Caco-2 (cell line): ENCODE measurements at regions of chr19 and their contacts with region 1.

Region 1: GRCh38 chr19:53520550-53521372 is 17.2 kb upstream of the ZNF331 start:
- DNase-seq: peak; percentile 92 to 97
- H3K4me3 ChIP-seq: peak overlapping the region; percentile 78
- H3K4me3 Mint-ChIP-seq: peak overlapping the region; percentile 90
- H3K27ac Mint-ChIP-seq: peak overlapping the region; percentile 85
- H3K4me1 ChIP-seq: no peaks in the 10 kb centered on the region
- H3K4me1 Mint-ChIP-seq: no peaks in the 10 kb centered on the region
- H3K27me3 ChIP-seq: no peaks in the 10 kb centered on the region
- H3K27me3 Mint-ChIP-seq: no peaks in the 10 kb centered on the region
- CTCF ChIP-seq: no peak

Region 2: DNA sequence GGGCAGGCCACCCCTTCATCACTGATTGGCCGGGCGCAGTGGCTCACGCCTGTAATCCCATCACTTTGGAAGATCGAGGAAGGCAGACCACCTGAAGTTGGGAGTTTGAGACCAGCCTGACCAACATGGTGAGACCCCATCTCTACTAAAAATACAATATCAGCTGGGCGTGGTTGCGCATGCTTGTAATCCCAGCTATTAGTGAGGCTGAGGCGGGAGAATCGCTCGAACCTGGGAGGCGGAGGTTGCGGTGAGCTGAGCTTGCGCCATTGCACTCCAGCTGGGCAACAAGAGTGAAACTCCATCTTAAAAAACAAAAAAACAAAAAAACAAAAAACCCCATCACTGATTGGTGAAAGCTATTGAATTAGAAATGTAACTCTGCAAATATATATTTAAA is 22.2 kb before region 1 on chr19:
- CTCF ChIA-PET with region 1: no interaction called
- POLR2A ChIA-PET with region 1: no interaction called
- intact Hi-C with region 1: no loop called
- DNase-seq: no peak
- H3K4me3 ChIP-seq: no peak overlapping the region
- H3K4me3 Mint-ChIP-seq: no peak overlapping the region
- H3K27ac Mint-ChIP-seq: peak overlapping the region; percentile 72
- H3K4me1 ChIP-seq: peaks cover 14% of the 10 kb centered on the region
- H3K4me1 Mint-ChIP-seq: peaks cover 17% of the 10 kb centered on the region
- H3K27me3 ChIP-seq: no peaks in the 10 kb centered on the region
- H3K27me3 Mint-ChIP-seq: no peaks in the 10 kb centered on the region
- CTCF ChIP-seq: no peak

Region 3: DNA sequence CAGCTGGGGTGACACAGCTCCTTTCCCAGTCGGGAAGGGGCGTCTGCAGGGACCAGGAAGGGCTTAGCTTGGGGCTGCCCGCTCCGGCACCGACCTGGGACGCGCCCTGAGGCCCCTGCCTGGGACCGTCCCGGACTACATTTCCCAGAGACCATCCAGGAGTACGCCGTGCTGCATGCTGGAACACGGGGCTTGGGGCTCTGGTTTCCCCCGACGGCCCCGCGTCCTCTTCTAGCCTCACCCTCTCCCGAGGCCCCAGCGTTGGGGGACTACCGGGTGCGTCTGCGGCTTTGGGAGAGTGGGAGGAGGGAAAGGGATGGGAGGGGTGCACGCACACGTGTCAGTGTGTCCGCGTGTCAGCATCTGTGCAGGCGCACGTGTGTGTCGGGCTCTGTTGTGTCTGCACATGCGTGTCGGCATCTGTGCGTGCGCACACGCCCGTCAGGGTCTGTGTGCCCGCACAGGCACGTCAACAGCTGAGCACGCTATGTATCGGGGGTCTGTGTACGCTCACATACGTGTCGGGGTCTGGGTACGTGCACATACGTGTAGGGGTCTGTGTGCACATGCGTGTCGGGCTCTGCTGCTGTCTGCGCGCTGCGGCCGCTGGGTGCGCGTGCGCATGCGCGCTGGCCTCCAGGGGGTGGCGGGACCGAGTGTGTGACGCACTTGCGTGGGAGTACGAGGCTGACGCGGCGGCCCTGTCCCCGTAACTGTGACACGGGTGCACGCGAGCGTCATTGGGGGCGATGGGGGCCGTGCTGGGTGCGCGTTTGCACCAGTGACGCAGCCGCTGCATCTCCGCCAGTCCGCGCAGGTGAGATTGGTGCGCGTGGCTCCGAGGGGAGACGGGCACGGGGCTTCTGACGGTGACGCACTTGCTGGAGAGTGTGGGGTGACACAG is 17.0 kb after region 1 on chr19 and contains the start of gene ZNF331:
- CTCF ChIA-PET with region 1: no interaction called
- POLR2A ChIA-PET with region 1: interaction called, 3 read pairs
- intact Hi-C with region 1: loop called (anchors 1 kb)
- DNase-seq: peak; percentile 86
- H3K4me3 ChIP-seq: peak within 1 kb of the TSS; percentile 88
- H3K4me3 Mint-ChIP-seq: peak within 1 kb of the TSS; percentile 94
- H3K27ac Mint-ChIP-seq: peak within 1 kb of the TSS; percentile 99
- H3K4me1 ChIP-seq: peaks cover 18% of the 10 kb centered on the region
- H3K4me1 Mint-ChIP-seq: no peaks in the 10 kb centered on the region
- H3K27me3 ChIP-seq: no peaks in the 10 kb centered on the region
- H3K27me3 Mint-ChIP-seq: no peaks in the 10 kb centered on the region
- CTCF ChIP-seq: peak in 1 of 2 experiments; percentile 40
- total RNA-seq, gene ZNF331: 42.2 and 42.6 TPM in 2 replicates

Region 4: DNA sequence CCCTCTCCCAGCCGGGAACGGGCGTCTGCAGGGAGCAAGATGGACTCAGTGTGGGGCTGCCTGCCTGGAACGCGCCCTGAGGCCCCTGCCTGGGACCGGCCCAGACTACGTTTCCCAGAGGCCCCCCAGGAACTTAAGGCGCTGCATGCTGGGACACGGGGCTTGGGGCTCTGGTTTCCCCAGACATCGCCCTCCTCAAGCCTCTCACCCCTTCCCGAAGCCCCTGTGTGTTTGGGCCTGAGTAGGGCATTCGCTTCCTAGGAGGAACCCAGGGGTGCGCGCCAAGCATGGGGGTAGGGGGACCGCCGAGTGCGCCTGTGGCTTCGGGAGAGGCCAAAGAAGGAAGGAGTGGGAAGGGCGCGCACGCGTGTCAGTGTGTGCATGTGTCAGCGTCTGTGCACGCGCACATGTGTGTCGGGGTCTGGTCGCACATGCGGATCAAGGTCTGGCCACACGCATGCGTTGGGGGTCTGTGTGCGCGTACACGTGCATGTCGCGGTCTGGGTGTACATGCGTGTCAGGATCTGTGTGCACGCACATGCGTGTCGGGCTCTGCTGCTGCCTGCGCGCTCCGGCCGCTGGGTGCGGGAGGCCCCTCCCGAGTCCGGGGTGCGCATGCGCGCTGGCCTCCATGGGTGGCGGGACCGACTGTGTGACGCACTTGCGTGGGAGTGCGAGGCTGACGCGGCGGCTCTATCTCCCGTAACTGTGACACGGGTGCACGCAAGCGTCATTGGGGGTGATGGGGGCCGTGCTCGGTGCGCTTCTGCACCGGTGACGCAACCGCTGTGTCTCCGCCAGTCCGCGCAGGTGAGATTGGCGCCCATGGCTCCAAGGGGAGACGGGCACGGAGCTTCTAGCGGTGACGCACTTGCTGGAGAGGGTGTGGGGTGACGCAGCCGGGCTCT is 33.4 kb after region 1 on chr19:
- CTCF ChIA-PET with region 1: no interaction called
- POLR2A ChIA-PET with region 1: no interaction called
- intact Hi-C with region 1: loop called (anchors 1 kb)
- DNase-seq: peak; percentile 90
- H3K4me3 ChIP-seq: peak overlapping the region; percentile 68
- H3K4me3 Mint-ChIP-seq: peak overlapping the region; percentile 92
- H3K27ac Mint-ChIP-seq: peak overlapping the region; percentile 97
- H3K4me1 ChIP-seq: no peaks in the 10 kb centered on the region
- H3K4me1 Mint-ChIP-seq: peaks cover 5% of the 10 kb centered on the region
- H3K27me3 ChIP-seq: no peaks in the 10 kb centered on the region
- H3K27me3 Mint-ChIP-seq: no peaks in the 10 kb centered on the region
- CTCF ChIP-seq: no peak